ENCODE measurements at regions of chr7 and their contacts with region 1.

Region 1: DNA sequence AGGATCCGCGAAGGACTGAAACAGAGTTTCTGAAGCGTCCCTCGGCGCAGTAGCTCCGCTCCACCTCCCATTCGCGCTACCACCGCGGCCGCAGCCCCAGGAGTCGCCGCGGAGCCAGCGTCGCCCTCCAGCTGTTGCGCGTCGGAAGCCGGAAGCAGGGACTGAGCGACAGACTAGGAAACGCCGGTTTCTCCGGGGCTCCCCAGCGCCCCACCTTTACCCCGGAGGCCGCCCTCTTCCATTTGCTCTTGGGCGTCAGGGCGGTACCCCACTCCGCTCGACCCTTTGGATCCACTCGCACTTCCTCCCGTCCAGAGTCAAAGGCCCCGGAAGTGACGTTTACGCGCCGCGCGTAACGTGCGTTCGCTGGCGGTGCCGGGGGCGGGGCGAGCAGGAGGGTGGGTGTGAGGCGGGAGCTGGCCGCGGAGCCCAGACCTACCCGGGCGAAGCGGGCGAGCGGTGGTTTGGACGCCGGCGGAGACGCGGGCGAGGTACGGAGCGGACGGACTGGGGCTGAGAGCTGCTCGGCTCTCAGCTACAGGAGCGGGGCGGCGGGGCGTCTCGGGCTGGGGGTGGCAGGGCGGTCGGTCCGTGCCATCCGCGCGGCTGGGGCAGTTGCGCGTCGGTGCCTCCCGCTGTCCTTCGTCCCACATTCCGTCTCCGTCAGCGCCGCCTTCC is at the start of gene RABGEF1:
- DNase-seq: peak; percentile 98 to 99 (median 99)
- ATAC-seq: peak; percentile 97 to 99 (median 97)
- H3K4me3 ChIP-seq: peak within 1 kb of the TSS; percentile 65 to 100 (median 96)
- H3K27ac ChIP-seq: peak within 1 kb of the TSS; percentile 88 to 100 (median 94)
- H3K4me1 ChIP-seq: peaks cover 0 to 35% (median 15%) of the 10 kb centered on the region in 12 donors
- H3K27me3 ChIP-seq: no peaks in the 10 kb centered on the region
- CTCF ChIP-seq: peak in 2 of 12 donors; percentile 9 to 18
- POLR2A ChIP-seq: peak; percentile 41 to 92
- total RNA-seq, gene RABGEF1: 14.8 to 21.2 (median 19.6) TPM

Region 2: DNA sequence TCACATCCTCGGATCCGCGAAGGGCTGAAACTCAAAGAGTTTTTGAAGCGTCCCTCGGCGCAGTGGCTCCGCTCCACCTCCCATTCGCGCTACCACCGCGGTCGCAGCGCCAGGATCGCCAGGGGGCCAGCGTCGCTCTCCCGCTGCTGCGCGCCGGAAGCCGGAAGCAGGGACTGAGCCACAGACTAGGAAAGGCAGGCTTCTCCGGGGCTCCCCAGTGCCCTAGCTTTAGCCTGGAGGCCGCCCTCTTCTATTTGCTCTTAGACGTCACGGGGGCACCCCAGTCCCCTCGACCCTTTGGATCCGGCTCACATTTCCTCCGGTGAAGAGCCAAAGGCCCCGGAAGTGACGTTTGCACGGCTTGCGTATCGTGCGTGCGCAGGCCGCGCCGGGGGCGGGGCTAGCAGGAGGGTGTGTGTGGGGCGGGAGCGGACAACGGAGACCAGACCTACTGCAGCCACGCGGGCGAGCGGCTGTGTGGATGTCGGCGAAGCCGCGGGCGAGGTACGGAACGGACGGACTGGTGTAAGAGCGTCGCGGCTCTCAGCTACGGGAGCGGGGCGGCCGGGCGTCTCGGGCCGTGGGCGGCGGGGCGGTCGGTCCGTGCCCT is 86.2 kb before region 1 on chr7:
- intact Hi-C with region 1: loop called in 1 of 10 experiments (anchors 1 kb)
- DNase-seq: peak; percentile 97 to 99 (median 98)
- ATAC-seq: peak; percentile 98 to 99 (median 98)
- H3K4me3 ChIP-seq: peak overlapping the region; percentile 53 to 98 (median 78)
- H3K27ac ChIP-seq: peak overlapping the region; percentile 90 to 100 (median 98)
- H3K4me1 ChIP-seq: peaks cover 0 to 23% (median 11%) of the 10 kb centered on the region in 12 donors
- H3K27me3 ChIP-seq: no peaks in the 10 kb centered on the region
- CTCF ChIP-seq: peak in 8 of 12 donors; percentile 14 to 52 (median 37)
- POLR2A ChIP-seq: peak; percentile 69 to 97

Region 3: DNA sequence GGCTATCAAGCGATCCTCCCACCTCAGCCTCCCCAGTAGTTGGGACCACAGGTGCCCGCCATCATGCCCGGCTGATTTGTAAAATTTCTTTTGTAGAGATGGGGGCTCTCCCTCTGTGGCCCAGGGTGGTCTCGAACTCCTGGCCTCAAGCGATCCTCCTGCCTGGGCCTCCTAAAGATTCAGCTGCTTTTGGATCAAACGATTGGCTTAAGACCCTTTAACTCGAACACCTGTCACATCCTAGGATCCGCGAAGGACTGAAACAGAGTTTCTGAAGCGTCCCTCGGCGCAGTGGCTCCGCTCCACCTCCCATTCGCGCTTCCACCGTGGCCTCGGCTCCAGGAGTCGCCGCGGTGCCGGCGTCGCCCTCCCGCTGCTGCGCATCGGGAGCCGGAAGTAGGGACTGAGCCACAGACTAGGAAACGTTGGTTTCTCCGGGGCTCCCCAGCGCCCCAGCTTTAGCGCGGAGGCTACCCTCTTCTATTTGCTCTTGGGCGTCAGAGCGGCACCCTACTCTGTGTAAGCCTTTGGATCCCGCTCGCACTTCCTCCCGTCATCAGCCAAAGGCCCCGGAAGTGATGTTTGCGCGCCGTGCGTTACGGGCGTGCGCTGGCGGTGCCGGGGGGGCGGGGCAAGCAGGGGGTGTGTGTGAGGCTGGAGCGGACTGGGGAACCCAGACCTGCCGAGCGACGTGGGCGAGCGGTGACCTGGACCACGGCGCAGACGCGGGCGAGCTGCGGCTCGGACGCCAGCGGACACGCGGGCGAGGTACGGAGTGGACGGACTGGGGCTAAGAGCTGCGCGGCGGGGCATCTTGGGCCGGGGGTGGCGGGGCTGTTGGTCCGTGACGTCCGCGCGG is 58.7 kb before region 1 on chr7:
- intact Hi-C with region 1: loop called in 3 of 10 experiments (anchors 5 to 10 kb)
- DNase-seq: peak; percentile 97 to 98 (median 98)
- ATAC-seq: peak; percentile 99 to 100 (median 99)
- H3K4me3 ChIP-seq: peak overlapping the region; percentile 66 to 98 (median 92)
- H3K27ac ChIP-seq: peak overlapping the region; percentile 87 to 99 (median 96)
- H3K4me1 ChIP-seq: peaks cover 0 to 33% (median 13%) of the 10 kb centered on the region in 12 donors
- H3K27me3 ChIP-seq: no peaks in the 10 kb centered on the region
- CTCF ChIP-seq: no peak
- POLR2A ChIP-seq: peak; percentile 74 to 94

Region 4: DNA sequence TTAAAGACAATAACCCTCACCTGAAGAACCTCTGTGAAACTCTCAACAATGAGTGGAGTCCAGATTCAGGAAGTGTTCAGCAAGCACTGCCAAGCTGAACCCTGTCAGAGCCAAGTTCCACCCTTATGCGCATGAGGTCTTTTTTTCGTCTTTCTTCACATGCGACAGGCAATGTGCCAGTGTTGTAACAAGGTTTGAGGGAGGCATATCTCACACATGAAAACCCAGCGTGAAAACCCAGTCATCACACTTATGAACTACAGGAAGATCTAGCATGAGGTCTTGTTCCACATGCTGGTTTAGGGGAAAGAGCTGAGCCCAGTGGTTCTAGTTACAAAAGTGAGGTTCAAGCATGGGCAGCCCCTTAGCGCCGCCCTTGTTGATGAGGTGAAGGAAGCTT is 49.8 kb after region 1 on chr7:
- intact Hi-C with region 1: loop called in 1 of 10 experiments (anchors 10 kb)
- DNase-seq: no peak
- ATAC-seq: peak in 2 of 4 donors; percentile 20 to 29
- H3K4me3 ChIP-seq: no peak overlapping the region
- H3K27ac ChIP-seq: no peak overlapping the region
- H3K4me1 ChIP-seq: no peaks in the 10 kb centered on the region
- H3K27me3 ChIP-seq: no peaks in the 10 kb centered on the region
- CTCF ChIP-seq: no peak
- POLR2A ChIP-seq: no peak

Measured in heart left ventricle (tissue), 16 donors.